ENCODE measurements at regions of chr14 and their contacts with region 1.

Region 1: GRCh38 chr14:69580009-69580577 is 5.4 kb upstream of the CCDC177 start:
- DNase-seq: peak; percentile 74
- H3K4me3 ChIP-seq: no peak overlapping the region
- H3K27ac ChIP-seq: no peak overlapping the region
- H3K4me1 ChIP-seq: no peaks in the 10 kb centered on the region
- H3K27me3 ChIP-seq: peaks cover 34% of the 10 kb centered on the region
- CTCF ChIP-seq: peak; percentile 73

Region 2: DNA sequence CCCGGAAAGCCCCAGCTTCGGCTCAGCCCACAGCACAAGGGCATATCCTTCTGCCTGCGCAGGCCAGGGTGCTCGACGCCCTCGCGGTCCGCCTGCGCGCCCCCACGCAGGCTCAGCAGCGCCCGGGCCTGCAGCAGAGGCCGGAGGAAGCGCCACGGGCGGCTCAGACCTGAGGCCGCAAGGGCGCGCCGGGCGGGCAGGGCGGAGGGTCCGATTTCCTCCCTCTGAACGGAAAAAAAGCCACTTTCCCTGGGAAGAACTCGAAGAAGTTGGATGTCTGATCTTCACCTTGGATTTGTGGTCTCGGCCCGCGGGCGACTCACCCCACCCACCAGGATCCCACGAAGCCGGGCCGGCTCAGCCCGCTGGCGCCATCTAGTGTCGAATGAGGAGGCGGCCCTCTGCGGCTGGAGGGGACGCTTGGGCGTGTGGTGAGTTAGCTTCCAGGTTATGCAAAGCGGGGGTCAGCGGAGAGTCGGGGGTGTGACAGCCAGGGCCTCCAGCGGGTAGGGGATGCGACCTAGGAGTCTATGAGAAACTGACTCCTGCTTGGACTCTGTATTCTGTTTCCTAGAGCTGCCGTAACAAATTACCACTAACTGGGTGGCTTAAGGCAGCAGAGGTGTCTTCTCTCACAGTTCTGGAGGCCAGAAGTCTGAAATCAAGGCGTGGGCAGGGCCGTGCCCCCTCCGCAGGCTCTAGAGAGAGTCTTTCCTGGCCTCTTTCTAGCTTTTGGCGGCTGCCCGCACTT is 146.8 kb after region 1 on chr14:
- CTCF ChIA-PET with region 1: interaction called, 19 read pairs
- POLR2A ChIA-PET with region 1: no interaction called
- intact Hi-C with region 1: loop called (anchors 1 kb)
- DNase-seq: peak; percentile 85
- H3K4me3 ChIP-seq: peak overlapping the region; percentile 35
- H3K27ac ChIP-seq: no peak overlapping the region
- H3K4me1 ChIP-seq: peaks cover 3% of the 10 kb centered on the region
- H3K27me3 ChIP-seq: no peaks in the 10 kb centered on the region
- CTCF ChIP-seq: peak; percentile 96

Region 3: DNA sequence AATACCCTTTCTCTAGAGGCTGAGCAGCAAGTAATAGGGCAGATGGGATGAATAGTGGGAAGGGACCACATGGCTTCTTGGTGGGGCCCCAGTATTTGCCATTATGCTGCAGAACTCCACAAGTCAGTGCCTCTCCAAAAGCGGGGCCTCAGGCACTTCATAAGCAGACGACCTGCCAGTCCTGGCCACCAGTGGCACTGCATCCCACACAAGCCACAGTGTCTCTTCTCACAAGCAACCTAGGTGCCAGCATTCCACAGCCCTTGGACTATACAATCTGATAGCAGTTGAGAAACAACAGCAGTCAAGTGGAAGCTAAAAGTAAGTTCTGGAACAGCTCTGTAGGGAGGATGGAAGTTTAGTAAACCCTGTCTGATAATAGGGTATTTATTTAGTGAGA is 612.8 kb after region 1 on chr14:
- CTCF ChIA-PET with region 1: no interaction called
- POLR2A ChIA-PET with region 1: no interaction called
- intact Hi-C with region 1: no loop called
- DNase-seq: no peak
- H3K4me3 ChIP-seq: no peak overlapping the region
- H3K27ac ChIP-seq: no peak overlapping the region
- H3K4me1 ChIP-seq: peaks cover 8% of the 10 kb centered on the region
- H3K27me3 ChIP-seq: peaks cover 58% of the 10 kb centered on the region
- CTCF ChIP-seq: no peak

Measured in A673 (cell line).